Heart left ventricle (tissue), 16 donors: ENCODE measurements at regions of chr11 and their contacts with region 1.

Region 1: DNA sequence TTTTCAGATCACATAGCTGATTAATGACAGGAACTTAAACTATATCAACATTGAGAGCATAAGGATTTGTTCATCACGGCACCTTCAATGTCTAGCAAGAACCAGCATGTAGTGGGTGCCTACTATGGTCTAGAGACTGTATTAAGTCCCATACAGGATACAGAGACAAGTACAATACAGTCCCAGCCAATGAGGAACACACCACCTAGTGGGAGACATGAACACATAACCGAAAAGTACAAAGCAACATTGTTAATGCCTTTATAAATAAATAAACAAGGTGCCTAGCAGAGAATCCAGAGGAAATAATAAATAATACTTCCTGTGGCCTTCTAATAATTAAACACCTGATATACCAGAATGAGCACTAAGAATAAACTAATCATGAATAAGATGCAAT is 87.7 kb upstream of the OPCML start:
- DNase-seq: no peak
- ATAC-seq: peak in 3 of 4 donors; percentile 49 to 75 (median 69)
- H3K4me3 ChIP-seq: no peak overlapping the region
- H3K27ac ChIP-seq: no peak overlapping the region
- H3K4me1 ChIP-seq: no peaks in the 10 kb centered on the region
- H3K27me3 ChIP-seq: peaks cover 0 to 5% (median 0%) of the 10 kb centered on the region in 9 donors
- CTCF ChIP-seq: peak in 11 of 12 donors; percentile 13 to 48 (median 34)
- POLR2A ChIP-seq: no peak

Region 2: GRCh38 chr11:133809569-133810491 is 189.9 kb after region 1 on chr11:
- intact Hi-C with region 1: loop called in 1 of 10 experiments (anchors 10 kb)
- DNase-seq: peak in 1 of 5 donors; percentile 21
- ATAC-seq: peak in 3 of 4 donors; percentile 55 to 80 (median 69)
- H3K4me3 ChIP-seq: peak overlapping the region in 2 of 12 donors; percentile 8 to 17
- H3K27ac ChIP-seq: no peak overlapping the region
- H3K4me1 ChIP-seq: peaks cover 0 to 10% (median 0%) of the 10 kb centered on the region in 12 donors
- H3K27me3 ChIP-seq: peaks cover 0 to 31% (median 3%) of the 10 kb centered on the region in 9 donors
- CTCF ChIP-seq: no peak
- POLR2A ChIP-seq: no peak